ENCODE measurements at regions of chr3 and their contacts with region 1.

Region 1: GRCh38 chr3:177934001-177934891 is 602.0 kb upstream of the KCNMB2 start:
- DNase-seq: peak; percentile 21
- ATAC-seq: no peak
- H3K4me3 ChIP-seq: no peak overlapping the region
- H3K27ac ChIP-seq: no peak overlapping the region
- H3K4me1 ChIP-seq: peaks cover 53% of the 10 kb centered on the region
- H3K27me3 ChIP-seq: no peaks in the 10 kb centered on the region
- CTCF ChIP-seq: no peak

Region 2: GRCh38 chr3:177624514-177625495 is 309.4 kb before region 1 on chr3:
- CTCF ChIA-PET with region 1: no interaction called
- POLR2A ChIA-PET with region 1: interaction called, 3 read pairs
- intact Hi-C with region 1: loop called (anchors 5 kb)
- DNase-seq: peak; percentile 72
- ATAC-seq: peak; percentile 74
- H3K4me3 ChIP-seq: no peak overlapping the region
- H3K27ac ChIP-seq: peak overlapping the region; percentile 28
- H3K4me1 ChIP-seq: peaks cover 29% of the 10 kb centered on the region
- H3K27me3 ChIP-seq: no peaks in the 10 kb centered on the region
- CTCF ChIP-seq: 0 out of 2 replicates have a peak, but pooled peaks have one; percentile 20

Region 3: DNA sequence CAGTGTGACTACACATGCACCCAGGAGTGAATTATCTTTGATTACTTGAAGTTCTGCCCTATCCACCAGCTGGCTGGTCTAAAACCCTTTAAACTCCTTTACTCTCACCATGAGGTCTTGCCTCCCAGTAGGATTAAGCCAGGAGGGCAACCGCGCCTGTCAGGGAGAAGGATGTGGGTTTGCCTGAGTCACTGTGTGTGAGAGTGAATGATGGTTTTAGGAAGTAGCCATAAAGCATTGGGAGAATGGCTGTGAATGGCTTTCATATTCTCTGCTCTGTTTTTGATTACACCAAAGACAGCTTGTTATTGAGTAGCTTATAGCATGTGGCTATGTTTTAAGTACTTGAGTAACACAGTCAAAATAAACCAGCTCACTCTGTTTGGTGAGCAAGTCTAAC is 99.2 kb before region 1 on chr3:
- CTCF ChIA-PET with region 1: no interaction called
- POLR2A ChIA-PET with region 1: no interaction called
- intact Hi-C with region 1: loop called (anchors 5 kb)
- DNase-seq: peak; percentile 92
- ATAC-seq: peak; percentile 96
- H3K4me3 ChIP-seq: no peak overlapping the region
- H3K27ac ChIP-seq: peak overlapping the region; percentile 40
- H3K4me1 ChIP-seq: peaks cover 34% of the 10 kb centered on the region
- H3K27me3 ChIP-seq: no peaks in the 10 kb centered on the region
- CTCF ChIP-seq: no peak

Region 4: GRCh38 chr3:177852001-177852816 is 82.0 kb before region 1 on chr3:
- CTCF ChIA-PET with region 1: no interaction called
- POLR2A ChIA-PET with region 1: no interaction called
- intact Hi-C with region 1: loop called (anchors 5 kb)
- DNase-seq: peak; percentile 71
- ATAC-seq: peak; percentile 97
- H3K4me3 ChIP-seq: no peak overlapping the region
- H3K27ac ChIP-seq: peak overlapping the region; percentile 25
- H3K4me1 ChIP-seq: peaks cover 18% of the 10 kb centered on the region
- H3K27me3 ChIP-seq: no peaks in the 10 kb centered on the region
- CTCF ChIP-seq: no peak

Region 5: DNA sequence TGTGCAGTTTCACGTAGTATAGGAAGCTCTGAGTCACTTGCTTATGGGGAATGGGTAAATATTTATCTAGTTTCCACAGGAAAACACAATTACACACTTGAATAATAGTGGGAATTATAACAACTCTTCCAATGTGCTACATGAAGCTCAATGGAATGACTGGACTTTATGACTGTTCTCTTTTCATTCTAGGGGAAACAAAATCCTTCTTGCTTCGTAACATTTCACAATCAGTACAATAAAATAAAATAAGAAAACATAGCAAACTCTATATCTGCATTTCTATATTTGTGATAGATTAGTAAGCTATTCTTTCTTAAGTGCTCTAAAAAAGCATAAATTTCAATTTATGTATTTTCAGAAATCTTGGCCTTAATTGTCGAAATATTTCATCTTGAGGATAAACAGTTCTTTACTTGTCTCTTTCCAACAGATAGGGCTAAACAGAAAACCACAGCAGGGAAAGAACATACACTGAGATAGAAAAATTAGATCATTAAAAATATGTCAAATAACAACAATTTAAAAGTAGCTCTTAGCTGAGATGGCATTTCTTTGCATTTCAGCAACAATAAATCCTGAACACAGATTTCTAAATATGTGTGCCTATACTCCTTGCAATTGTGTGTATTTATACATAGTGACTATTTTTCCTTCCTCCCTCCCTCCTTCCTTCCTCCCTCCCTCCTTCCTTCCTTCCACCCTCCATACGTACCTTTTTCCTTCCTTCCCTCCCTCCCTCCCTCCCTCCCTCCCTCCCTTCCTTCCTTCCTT is 206.5 kb after region 1 on chr3:
- CTCF ChIA-PET with region 1: no interaction called
- POLR2A ChIA-PET with region 1: no interaction called
- intact Hi-C with region 1: loop called (anchors 5 kb)
- DNase-seq: peak; percentile 81
- ATAC-seq: peak; percentile 93
- H3K4me3 ChIP-seq: no peak overlapping the region
- H3K27ac ChIP-seq: peak overlapping the region; percentile 60
- H3K4me1 ChIP-seq: peaks cover 8% of the 10 kb centered on the region
- H3K27me3 ChIP-seq: no peaks in the 10 kb centered on the region
- CTCF ChIP-seq: no peak

Measured in PC-3 (cell line).